H1 (cell line): ENCODE measurements at regions of chr13 and their contacts with region 1.

Region 1: GRCh38 chr13:77480066-77480465 is 55.4 kb upstream of the SCEL start:
- DNase-seq: peak in 1 of 2 experiments; percentile 9
- H3K4me3 ChIP-seq: no peak overlapping the region
- H3K27ac ChIP-seq: no peak overlapping the region
- H3K4me1 ChIP-seq: peaks cover 2 to 5% (median 4%) of the 10 kb centered on the region in 4 experiments; a peak in 4 of 7 replicates
- H3K27me3 ChIP-seq: no peaks in the 10 kb centered on the region
- CTCF ChIP-seq: no peak
- EP300 ChIP-seq: no peak
- POLR2A ChIP-seq: no peak
- RAD21 ChIP-seq: no peak

Region 2: GRCh38 chr13:77329133-77329910 is 150.7 kb before region 1 on chr13:
- CTCF ChIA-PET with region 1: interaction called, 12 read pairs
- POLR2A ChIA-PET with region 1: interaction called, 8 read pairs
- DNase-seq: peak; percentile 46 to 82
- H3K4me3 ChIP-seq: peak overlapping the region; percentile 81 to 88 (median 83)
- H3K27ac ChIP-seq: no peak overlapping the region
- H3K4me1 ChIP-seq: peaks cover 3 to 7% (median 5%) of the 10 kb centered on the region in 4 experiments; a peak in 6 of 7 replicates
- H3K27me3 ChIP-seq: peaks cover 0 to 4% (median 2%) of the 10 kb centered on the region in 4 experiments; a peak in 5 of 7 replicates
- CTCF ChIP-seq: no peak
- EP300 ChIP-seq: no peak
- POLR2A ChIP-seq: peak in 1 of 2 experiments; percentile 51; a peak in 2 of 3 replicates
- RAD21 ChIP-seq: no peak; a peak in 1 of 4 replicates

Region 3: GRCh38 chr13:77460195-77460594 is 19.9 kb before region 1 on chr13:
- CTCF ChIA-PET with region 1: interaction called, 12 read pairs
- POLR2A ChIA-PET with region 1: interaction called, 5 read pairs
- DNase-seq: no peak
- H3K4me3 ChIP-seq: no peak overlapping the region
- H3K27ac ChIP-seq: no peak overlapping the region
- H3K4me1 ChIP-seq: peaks cover 0 to 3% (median 0%) of the 10 kb centered on the region in 4 experiments; a peak in 1 of 7 replicates
- H3K27me3 ChIP-seq: no peaks in the 10 kb centered on the region
- CTCF ChIP-seq: no peak
- EP300 ChIP-seq: no peak
- POLR2A ChIP-seq: no peak
- RAD21 ChIP-seq: no peak

Region 4: GRCh38 chr13:77492982-77493381 is 12.9 kb after region 1 on chr13:
- CTCF ChIA-PET with region 1: interaction called, 16 read pairs
- POLR2A ChIA-PET with region 1: interaction called, 6 read pairs
- DNase-seq: no peak
- H3K4me3 ChIP-seq: no peak overlapping the region
- H3K27ac ChIP-seq: no peak overlapping the region
- H3K4me1 ChIP-seq: no peaks in the 10 kb centered on the region
- H3K27me3 ChIP-seq: no peaks in the 10 kb centered on the region
- CTCF ChIP-seq: peak in 1 of 3 experiments; percentile 16; a peak in 1 of 4 replicates
- EP300 ChIP-seq: no peak
- POLR2A ChIP-seq: no peak
- RAD21 ChIP-seq: peak; percentile 29 to 34; a peak in 3 of 4 replicates